GM12878 (cell line): ENCODE measurements at regions of chr11 and their contacts with region 1.

Region 1: DNA sequence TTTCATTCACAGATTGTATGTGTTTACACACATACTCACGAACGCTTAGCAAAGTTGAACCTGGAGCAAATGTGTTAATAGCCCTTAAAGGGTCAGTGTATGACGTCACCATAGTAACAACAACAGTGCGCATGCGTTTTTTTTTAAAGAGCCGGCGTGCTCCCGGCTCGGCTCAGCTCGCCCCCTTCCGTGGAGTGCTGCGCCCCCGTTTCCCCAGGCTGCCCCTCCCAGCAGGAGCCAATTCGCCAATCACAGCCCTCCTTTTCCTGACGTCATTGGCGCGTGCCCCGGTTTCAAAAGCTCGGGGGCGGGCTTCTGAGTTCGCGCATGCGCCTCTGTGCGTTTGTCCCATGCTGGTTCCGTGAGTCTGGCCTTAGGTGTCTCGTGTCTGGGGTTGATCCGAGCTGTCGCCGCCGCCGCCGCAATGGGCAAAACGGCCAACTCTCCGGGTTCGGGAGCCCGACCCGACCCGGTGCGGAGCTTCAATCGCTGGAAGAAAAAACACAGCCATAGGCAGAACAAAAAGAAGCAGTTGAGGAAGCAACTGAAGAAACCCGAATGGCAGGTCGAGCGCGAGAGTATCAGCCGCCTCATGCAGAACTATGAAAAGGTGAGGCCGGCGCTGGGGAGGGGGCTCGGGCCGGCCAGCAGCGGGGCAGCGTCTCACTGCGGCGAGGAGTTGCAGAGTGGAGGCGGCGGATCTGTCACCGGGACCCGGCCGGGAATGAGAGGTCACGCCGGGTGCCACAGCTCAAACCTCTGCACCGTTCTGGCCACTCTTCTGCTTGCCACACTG is at the start of gene DDX10:
- DNase-seq: peak; percentile 92
- ATAC-seq: peak; percentile 84
- H3K4me3 ChIP-seq: peak within 1 kb of the TSS; percentile 94
- H3K27ac ChIP-seq: peak within 1 kb of the TSS; percentile 79
- H3K4me1 ChIP-seq: peaks cover 30% of the 10 kb centered on the region
- H3K27me3 ChIP-seq: no peaks in the 10 kb centered on the region
- CTCF ChIP-seq: no peak; a peak in 1 of 6 replicates
- EP300 ChIP-seq: no peak; a peak in 1 of 4 replicates
- POLR2A ChIP-seq: peak; percentile 75
- RAD21 ChIP-seq: no peak
- polyA plus RNA-seq, gene DDX10: 20.9 to 31.5 TPM

Region 2: GRCh38 chr11:108121274-108122155 is 543.4 kb before region 1 on chr11 and contains the start of gene ACAT1:
- CTCF ChIA-PET with region 1: interaction called, 3 read pairs
- POLR2A ChIA-PET with region 1: interaction called, 3 read pairs
- RAD21 ChIA-PET with region 1: interaction called, 3 read pairs
- SMC1A ChIA-PET with region 1: interaction called, 5 read pairs
- in situ Hi-C with region 1: no loop called
- intact Hi-C with region 1: loop called (anchors 5 kb)
- DNase-seq: peak; percentile 71
- ATAC-seq: peak; percentile 98
- H3K4me3 ChIP-seq: peak within 1 kb of the TSS; percentile 73
- H3K27ac ChIP-seq: peak within 1 kb of the TSS; percentile 65
- H3K4me1 ChIP-seq: peaks cover 10% of the 10 kb centered on the region
- H3K27me3 ChIP-seq: no peaks in the 10 kb centered on the region
- CTCF ChIP-seq: peak; percentile 7 to 39 (median 10); a peak in 1 of 6 replicates
- EP300 ChIP-seq: no peak
- POLR2A ChIP-seq: peak; percentile 98
- RAD21 ChIP-seq: no peak
- polyA plus RNA-seq, gene ACAT1: 58.2 to 93.5 TPM

Region 3: DNA sequence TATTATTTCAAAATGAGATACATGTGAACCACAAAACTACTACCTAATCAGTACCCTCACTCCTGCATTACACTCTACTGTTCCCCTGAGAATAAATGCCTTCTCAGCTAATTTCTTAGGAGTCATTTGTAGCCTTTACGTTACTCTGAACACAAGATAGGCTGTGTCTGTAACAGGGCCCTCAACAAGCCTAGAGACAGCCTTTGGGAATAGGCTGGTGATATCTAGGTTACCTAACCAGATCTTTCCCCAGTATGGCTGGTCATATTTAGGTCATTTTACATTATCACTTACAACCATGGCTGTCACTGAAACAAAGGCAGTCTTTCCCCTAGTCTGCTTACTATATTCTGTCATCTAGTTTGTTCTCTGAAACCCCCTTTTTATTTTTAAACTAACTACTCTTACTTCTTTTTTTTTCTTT is 427.9 kb before region 1 on chr11:
- CTCF ChIA-PET with region 1: no interaction called
- POLR2A ChIA-PET with region 1: no interaction called
- RAD21 ChIA-PET with region 1: interaction called, 3 read pairs
- SMC1A ChIA-PET with region 1: interaction called, 3 read pairs
- in situ Hi-C with region 1: no loop called
- intact Hi-C with region 1: loop called (anchors 5 kb)
- DNase-seq: no peak
- ATAC-seq: peak; percentile 74
- H3K4me3 ChIP-seq: no peak overlapping the region
- H3K27ac ChIP-seq: peak overlapping the region; percentile 84
- H3K4me1 ChIP-seq: peaks cover 20% of the 10 kb centered on the region
- H3K27me3 ChIP-seq: no peaks in the 10 kb centered on the region
- CTCF ChIP-seq: no peak
- EP300 ChIP-seq: no peak
- POLR2A ChIP-seq: no peak
- RAD21 ChIP-seq: no peak

Region 4: GRCh38 chr11:108727665-108728064 is 62.7 kb after region 1 on chr11:
- CTCF ChIA-PET with region 1: interaction called, 30 read pairs
- POLR2A ChIA-PET with region 1: interaction called, 3 read pairs
- RAD21 ChIA-PET with region 1: interaction called, 13 read pairs
- SMC1A ChIA-PET with region 1: interaction called, 53 read pairs
- in situ Hi-C with region 1: no loop called
- intact Hi-C with region 1: loop called (anchors 5 kb)
- DNase-seq: no peak
- ATAC-seq: peak; percentile 67
- H3K4me3 ChIP-seq: peak overlapping the region; percentile 43
- H3K27ac ChIP-seq: peak overlapping the region; percentile 86
- H3K4me1 ChIP-seq: peaks cover 11% of the 10 kb centered on the region; the same call in 1 of the 2 replicates
- H3K27me3 ChIP-seq: no peaks in the 10 kb centered on the region
- CTCF ChIP-seq: no peak
- EP300 ChIP-seq: no peak
- POLR2A ChIP-seq: no peak
- RAD21 ChIP-seq: 0 out of 2 replicates have a peak, but pooled peaks have one; percentile 5